IMR-90 (cell line): ENCODE measurements at regions of chr13 and their contacts with region 1.

Region 1: GRCh38 chr13:60150538-60150937 is 13.2 kb downstream of the DIAPH3 start:
- DNase-seq: no peak
- ATAC-seq: no peak
- H3K4me3 ChIP-seq: no peak overlapping the region
- H3K27ac ChIP-seq: no peak overlapping the region
- H3K4me1 ChIP-seq: peaks cover 7% of the 10 kb centered on the region
- H3K27me3 ChIP-seq: no peaks in the 10 kb centered on the region
- CTCF ChIP-seq: no peak
- POLR2A ChIP-seq: no peak
- RAD21 ChIP-seq: no peak

Region 2: GRCh38 chr13:59970847-59971246 is 179.7 kb before region 1 on chr13:
- CTCF ChIA-PET with region 1: no interaction called
- POLR2A ChIA-PET with region 1: no interaction called
- dilution Hi-C with region 1: no loop called
- in situ Hi-C with region 1: no loop called
- intact Hi-C with region 1: no loop called
- DNase-seq: no peak
- ATAC-seq: no peak
- H3K4me3 ChIP-seq: no peak overlapping the region
- H3K27ac ChIP-seq: no peak overlapping the region
- H3K4me1 ChIP-seq: no peaks in the 10 kb centered on the region
- H3K27me3 ChIP-seq: no peaks in the 10 kb centered on the region
- CTCF ChIP-seq: no peak
- POLR2A ChIP-seq: no peak
- RAD21 ChIP-seq: no peak

Region 3: DNA sequence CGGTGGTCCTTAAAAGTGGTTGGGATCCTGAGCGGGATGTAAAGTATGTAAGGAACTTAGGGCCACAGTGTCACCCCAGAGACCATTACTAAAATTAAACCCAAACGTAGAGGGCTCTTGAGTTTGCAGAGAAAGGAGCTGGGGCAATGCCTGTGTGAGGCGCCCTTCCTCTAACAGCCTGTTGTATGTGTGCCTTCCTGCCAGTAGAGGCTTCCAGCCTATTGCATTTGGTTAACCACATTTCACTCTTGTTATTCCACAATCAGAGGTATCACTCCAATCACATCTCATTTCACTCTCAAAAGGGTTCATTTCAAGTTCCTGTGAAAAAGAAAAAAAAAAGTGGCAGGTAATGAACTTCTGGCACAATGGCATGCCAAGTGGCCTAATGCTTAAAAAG is 16.2 kb before region 1 on chr13:
- CTCF ChIA-PET with region 1: interaction called, 11 read pairs
- POLR2A ChIA-PET with region 1: no interaction called
- dilution Hi-C with region 1: no loop called
- in situ Hi-C with region 1: no loop called
- intact Hi-C with region 1: no loop called
- DNase-seq: no peak
- ATAC-seq: peak; percentile 43
- H3K4me3 ChIP-seq: no peak overlapping the region
- H3K27ac ChIP-seq: peak overlapping the region; percentile 75; the same call in 1 of the 2 replicates
- H3K4me1 ChIP-seq: peaks cover 5% of the 10 kb centered on the region
- H3K27me3 ChIP-seq: no peaks in the 10 kb centered on the region
- CTCF ChIP-seq: peak; percentile 32
- POLR2A ChIP-seq: no peak
- RAD21 ChIP-seq: no peak